Activated CD8-positive, alpha-beta T cell treated with anti-CD3 and anti-CD28 coated beads for 36 hours (primary cell): ENCODE measurements at regions of chr9 and their contacts with region 1.

Region 1: GRCh38 chr9:17005056-17005823 is 129.6 kb upstream of the CNTLN start:
- DNase-seq: no peak
- ATAC-seq: no peak
- H3K4me3 Mint-ChIP-seq: no peak overlapping the region
- H3K27ac Mint-ChIP-seq: no peak overlapping the region
- H3K4me1 Mint-ChIP-seq: no peaks in the 10 kb centered on the region
- H3K27me3 Mint-ChIP-seq: no peaks in the 10 kb centered on the region
- CTCF ChIP-seq: no peak

Region 2: DNA sequence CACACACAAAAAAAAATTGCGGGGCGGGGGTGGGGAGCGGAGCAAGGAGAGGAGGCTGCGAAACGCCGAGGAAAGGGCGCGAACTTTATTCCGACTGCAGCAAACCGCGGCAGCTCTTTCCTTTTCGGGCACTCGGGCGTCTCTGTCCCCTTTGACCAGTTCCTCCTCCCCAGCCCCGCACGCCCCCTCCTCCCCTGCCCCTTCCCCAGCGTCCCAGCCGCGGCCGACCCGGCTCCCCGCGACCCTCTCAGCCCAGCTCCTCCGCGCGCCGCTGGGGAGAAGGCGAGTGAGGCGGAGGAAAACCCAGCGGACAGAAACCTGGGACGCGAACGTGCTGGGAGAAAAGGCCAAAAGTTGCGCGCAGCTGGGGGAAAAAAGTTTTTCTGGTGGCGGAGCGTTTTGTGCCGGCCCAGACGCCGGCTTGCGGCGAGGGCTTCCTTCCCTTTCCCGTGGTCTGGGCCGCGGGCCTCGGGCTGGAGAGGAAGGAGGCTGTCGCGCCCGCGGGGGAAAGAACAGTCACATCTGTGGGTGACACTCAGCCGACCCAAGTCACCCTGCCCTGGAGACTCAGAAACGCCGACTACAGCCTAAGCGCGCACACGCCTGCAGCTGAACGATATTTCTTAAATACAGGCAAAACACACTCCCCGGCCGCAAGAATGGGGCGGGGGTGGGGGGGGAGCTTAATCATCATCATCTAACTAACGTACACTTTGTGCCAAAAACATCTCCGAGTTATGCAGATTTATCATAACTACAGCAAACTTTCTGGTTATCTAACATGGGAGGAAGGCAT is 133.7 kb before region 1 on chr9:
- CTCF ChIA-PET with region 1: no interaction called
- POLR2A ChIA-PET with region 1: no interaction called
- intact Hi-C with region 1: loop called (anchors 10 kb)
- DNase-seq: peak; percentile 30
- ATAC-seq: peak; percentile 24
- H3K4me3 Mint-ChIP-seq: peak overlapping the region; percentile 45
- H3K27ac Mint-ChIP-seq: no peak overlapping the region
- H3K4me1 Mint-ChIP-seq: peaks cover 4% of the 10 kb centered on the region
- H3K27me3 Mint-ChIP-seq: peaks cover 38% of the 10 kb centered on the region
- CTCF ChIP-seq: no peak

Region 3: GRCh38 chr9:17052626-17053025 is 47.4 kb after region 1 on chr9:
- CTCF ChIA-PET with region 1: no interaction called
- POLR2A ChIA-PET with region 1: no interaction called
- intact Hi-C with region 1: no loop called
- DNase-seq: no peak
- ATAC-seq: no peak
- H3K4me3 Mint-ChIP-seq: no peak overlapping the region
- H3K27ac Mint-ChIP-seq: no peak overlapping the region
- H3K4me1 Mint-ChIP-seq: no peaks in the 10 kb centered on the region
- H3K27me3 Mint-ChIP-seq: no peaks in the 10 kb centered on the region
- CTCF ChIP-seq: no peak

Region 4: GRCh38 chr9:17063535-17064135 is 58.4 kb after region 1 on chr9:
- CTCF ChIA-PET with region 1: no interaction called
- POLR2A ChIA-PET with region 1: no interaction called
- intact Hi-C with region 1: loop called (anchors 10 kb)
- DNase-seq: peak; percentile 11
- ATAC-seq: no peak
- H3K4me3 Mint-ChIP-seq: no peak overlapping the region
- H3K27ac Mint-ChIP-seq: no peak overlapping the region
- H3K4me1 Mint-ChIP-seq: no peaks in the 10 kb centered on the region
- H3K27me3 Mint-ChIP-seq: no peaks in the 10 kb centered on the region
- CTCF ChIP-seq: peak; percentile 53

Region 5: GRCh38 chr9:17837965-17838364 is 832.7 kb after region 1 on chr9:
- CTCF ChIA-PET with region 1: no interaction called
- POLR2A ChIA-PET with region 1: no interaction called
- intact Hi-C with region 1: no loop called
- DNase-seq: no peak
- ATAC-seq: no peak
- H3K4me3 Mint-ChIP-seq: no peak overlapping the region
- H3K27ac Mint-ChIP-seq: no peak overlapping the region
- H3K4me1 Mint-ChIP-seq: no peaks in the 10 kb centered on the region
- H3K27me3 Mint-ChIP-seq: no peaks in the 10 kb centered on the region
- CTCF ChIP-seq: no peak